Naive thymus-derived CD4-positive, alpha-beta T cell (primary cell): ENCODE measurements at regions of chr12 and their contacts with region 1.

Region 1: DNA sequence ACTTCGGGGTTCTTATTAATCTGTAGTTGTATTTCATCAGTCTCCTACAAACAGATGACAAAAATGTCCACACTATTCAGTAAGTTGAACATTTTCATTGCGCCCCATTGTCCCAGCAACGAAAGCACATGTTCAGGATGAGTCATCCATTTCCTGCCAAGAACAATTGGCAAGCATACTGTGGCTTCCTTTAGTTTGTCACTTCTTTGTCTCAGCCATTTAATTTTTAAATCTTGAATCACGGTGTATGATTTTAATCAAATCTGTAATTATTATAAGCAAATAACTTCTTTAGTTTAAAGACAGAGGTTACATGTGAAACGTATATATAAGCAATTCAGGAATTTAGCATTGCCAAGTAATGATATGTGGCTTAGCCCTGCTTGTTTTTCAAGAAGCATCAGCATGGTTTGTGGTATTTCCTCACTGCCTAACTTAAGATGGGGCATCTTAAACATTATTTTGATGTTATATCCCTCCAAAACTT is 211.3 kb upstream of the KRR1 start:
- DNase-seq: peak in 1 of 9 donors; percentile 26
- ATAC-seq: peak; percentile 72
- H3K4me3 ChIP-seq: no peak overlapping the region
- H3K4me3 Mint-ChIP-seq: peak overlapping the region in 2 of 10 donors; percentile 2 to 44
- H3K27ac ChIP-seq: no peak overlapping the region
- H3K27ac Mint-ChIP-seq: peak overlapping the region in 3 of 9 donors; percentile 77 to 84 (median 78)
- H3K4me1 ChIP-seq: peaks cover 3 to 7% of the 10 kb centered on the region in 2 donors
- H3K4me1 Mint-ChIP-seq: peaks cover 11 to 18% (median 13%) of the 10 kb centered on the region in 7 donors
- H3K27me3 ChIP-seq: no peaks in the 10 kb centered on the region
- H3K27me3 Mint-ChIP-seq: peaks cover 0 to 9% (median 5%) of the 10 kb centered on the region in 5 donors

Region 2: DNA sequence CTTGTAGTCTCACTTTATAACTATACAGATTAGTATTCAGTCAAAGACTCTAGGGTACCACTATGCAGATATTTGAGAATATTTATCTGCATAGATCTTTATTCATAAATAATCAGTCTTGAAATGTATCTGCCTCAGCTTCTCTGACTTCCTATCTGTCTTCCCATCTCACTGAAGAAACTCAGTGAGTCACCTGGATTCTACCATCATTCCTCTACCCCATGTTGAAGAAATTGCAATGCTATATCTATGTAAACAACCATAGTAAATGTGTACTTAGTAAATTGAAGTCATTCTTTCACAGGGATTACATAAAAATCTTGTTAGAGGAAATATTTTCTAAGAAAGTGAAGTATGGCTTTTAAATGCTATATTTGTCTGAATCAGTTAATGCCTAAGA is 896.6 kb before region 1 on chr12:
- CTCF ChIA-PET with region 1: no interaction called
- POLR2A ChIA-PET with region 1: no interaction called
- intact Hi-C with region 1: no loop called
- DNase-seq: no peak
- ATAC-seq: no peak
- H3K4me3 ChIP-seq: no peak overlapping the region
- H3K4me3 Mint-ChIP-seq: no peak overlapping the region
- H3K27ac ChIP-seq: no peak overlapping the region
- H3K27ac Mint-ChIP-seq: no peak overlapping the region
- H3K4me1 ChIP-seq: no peaks in the 10 kb centered on the region
- H3K4me1 Mint-ChIP-seq: no peaks in the 10 kb centered on the region
- H3K27me3 ChIP-seq: no peaks in the 10 kb centered on the region
- H3K27me3 Mint-ChIP-seq: no peaks in the 10 kb centered on the region

Region 3: DNA sequence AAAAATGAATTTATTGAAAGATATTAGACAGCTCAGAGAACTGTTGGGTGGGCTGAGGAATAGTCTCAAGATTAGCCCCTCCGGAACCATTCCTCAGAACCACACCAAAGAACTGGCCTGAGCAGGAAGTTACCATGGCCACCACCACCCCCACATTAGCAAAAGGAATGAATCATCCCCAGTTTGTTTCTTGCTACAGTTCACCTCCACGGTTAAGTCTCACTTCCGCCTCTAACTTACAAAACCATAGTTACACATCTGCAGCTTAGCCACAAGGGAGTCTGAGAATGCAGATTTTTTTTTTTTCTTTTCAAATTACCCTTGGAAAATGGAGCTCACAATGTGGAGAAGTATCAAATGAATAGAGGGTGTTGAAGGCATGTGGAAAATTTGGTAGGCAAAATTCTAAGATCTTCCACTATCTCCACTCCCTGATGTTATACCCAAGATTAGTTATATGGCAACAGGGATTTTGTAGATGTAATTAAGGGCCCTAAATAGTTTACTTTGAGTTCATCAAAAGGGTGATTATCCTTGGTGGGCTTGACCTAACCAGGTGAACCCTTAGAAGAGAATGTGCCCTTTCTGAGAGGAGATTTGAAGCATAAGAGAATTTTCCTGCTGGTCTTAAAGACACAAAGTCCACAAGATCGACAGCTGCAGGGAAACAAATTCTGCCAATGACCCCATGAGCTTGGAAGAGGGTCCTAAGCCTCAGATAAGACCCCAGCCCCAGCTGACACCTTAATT is 81.6 kb before region 1 on chr12:
- CTCF ChIA-PET with region 1: no interaction called
- POLR2A ChIA-PET with region 1: no interaction called
- intact Hi-C with region 1: loop called in 1 of 2 experiments (anchors 1 kb)
- DNase-seq: peak in 1 of 9 donors; percentile 55
- ATAC-seq: peak; percentile 74
- H3K4me3 ChIP-seq: no peak overlapping the region
- H3K4me3 Mint-ChIP-seq: peak overlapping the region in 1 of 10 donors; percentile 20
- H3K27ac ChIP-seq: no peak overlapping the region
- H3K27ac Mint-ChIP-seq: peak overlapping the region in 1 of 9 donors; percentile 53
- H3K4me1 ChIP-seq: peaks cover 0 to 11% of the 10 kb centered on the region in 2 donors
- H3K4me1 Mint-ChIP-seq: peaks cover 0 to 20% (median 0%) of the 10 kb centered on the region in 7 donors
- H3K27me3 ChIP-seq: no peaks in the 10 kb centered on the region
- H3K27me3 Mint-ChIP-seq: peaks cover 1 to 10% (median 6%) of the 10 kb centered on the region in 5 donors

Region 4: GRCh38 chr12:75702477-75703093 is 20.2 kb before region 1 on chr12:
- CTCF ChIA-PET with region 1: no interaction called
- POLR2A ChIA-PET with region 1: no interaction called
- intact Hi-C with region 1: loop called in 1 of 2 experiments (anchors 2 kb)
- DNase-seq: peak in 1 of 9 donors; percentile 21
- ATAC-seq: no peak
- H3K4me3 ChIP-seq: no peak overlapping the region
- H3K4me3 Mint-ChIP-seq: peak overlapping the region in 7 of 10 donors; percentile 2 to 73 (median 59)
- H3K27ac ChIP-seq: no peak overlapping the region
- H3K27ac Mint-ChIP-seq: peak overlapping the region in 7 of 9 donors; percentile 7 to 80 (median 37)
- H3K4me1 ChIP-seq: peaks cover 6 to 7% of the 10 kb centered on the region in 2 donors
- H3K4me1 Mint-ChIP-seq: peaks cover 8 to 21% (median 14%) of the 10 kb centered on the region in 7 donors
- H3K27me3 ChIP-seq: no peaks in the 10 kb centered on the region
- H3K27me3 Mint-ChIP-seq: peaks cover 0 to 7% (median 0%) of the 10 kb centered on the region in 5 donors

Region 5: GRCh38 chr12:75712252-75712651 is 10.5 kb before region 1 on chr12:
- CTCF ChIA-PET with region 1: interaction called, 3 read pairs
- POLR2A ChIA-PET with region 1: no interaction called
- intact Hi-C with region 1: loop called in 1 of 2 experiments (anchors 1 kb)
- DNase-seq: no peak
- ATAC-seq: no peak
- H3K4me3 ChIP-seq: no peak overlapping the region
- H3K4me3 Mint-ChIP-seq: no peak overlapping the region
- H3K27ac ChIP-seq: no peak overlapping the region
- H3K27ac Mint-ChIP-seq: no peak overlapping the region
- H3K4me1 ChIP-seq: no peaks in the 10 kb centered on the region
- H3K4me1 Mint-ChIP-seq: peaks cover 0 to 3% (median 0%) of the 10 kb centered on the region in 7 donors
- H3K27me3 ChIP-seq: no peaks in the 10 kb centered on the region
- H3K27me3 Mint-ChIP-seq: peaks cover 0 to 47% (median 0%) of the 10 kb centered on the region in 5 donors

Region 6: DNA sequence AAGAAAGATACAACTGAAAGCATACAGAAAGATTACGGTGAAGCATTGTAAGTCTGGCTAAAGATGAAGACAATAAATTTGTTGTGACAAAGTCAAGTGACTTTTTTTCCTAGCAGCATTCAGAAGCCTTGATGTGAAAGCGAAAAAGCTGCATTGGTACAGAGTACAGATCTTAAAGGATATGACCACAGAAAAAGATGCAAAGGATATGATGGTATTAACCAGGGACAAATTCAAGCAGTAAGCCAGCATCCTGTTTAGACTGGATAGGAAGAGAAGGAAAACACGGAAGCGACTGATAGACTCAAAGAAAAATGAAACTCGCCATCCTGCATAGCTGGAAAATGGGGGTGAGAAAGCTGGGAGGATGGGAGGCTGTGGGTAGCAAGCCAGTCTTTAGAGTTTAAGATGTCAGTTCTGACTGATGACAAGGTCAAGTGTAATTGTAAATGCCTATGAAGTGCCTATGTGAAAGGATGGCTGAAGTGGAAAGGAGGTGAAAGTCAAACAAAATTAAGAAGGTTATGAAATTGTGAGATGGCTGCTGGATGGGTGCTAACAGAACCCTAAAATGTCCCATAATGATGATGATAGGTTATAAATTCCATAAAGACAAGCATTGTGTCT is 216.4 kb after region 1 on chr12:
- CTCF ChIA-PET with region 1: no interaction called
- POLR2A ChIA-PET with region 1: no interaction called
- intact Hi-C with region 1: loop called in 1 of 2 experiments (anchors 5 kb)
- DNase-seq: no peak
- ATAC-seq: no peak
- H3K4me3 ChIP-seq: no peak overlapping the region
- H3K4me3 Mint-ChIP-seq: no peak overlapping the region
- H3K27ac ChIP-seq: no peak overlapping the region
- H3K27ac Mint-ChIP-seq: no peak overlapping the region
- H3K4me1 ChIP-seq: peaks cover 0 to 15% of the 10 kb centered on the region in 2 donors
- H3K4me1 Mint-ChIP-seq: peaks cover 0 to 15% (median 12%) of the 10 kb centered on the region in 7 donors
- H3K27me3 ChIP-seq: no peaks in the 10 kb centered on the region
- H3K27me3 Mint-ChIP-seq: no peaks in the 10 kb centered on the region